Motor neuron (in vitro differentiated cells): ENCODE measurements at regions of chr18 and their contacts with region 1.

Region 1: GRCh38 chr18:10304853-10305252 is 149.6 kb upstream of the APCDD1 start:
- ATAC-seq: peak in 7 of 8 experiments; percentile 52 to 93 (median 77)
- H3K4me3 ChIP-seq: no peak overlapping the region
- H3K27ac ChIP-seq: peak overlapping the region in 1 of 2 donors; percentile 52
- H3K4me1 ChIP-seq: peaks cover 6 to 12% of the 10 kb centered on the region in 2 donors

Region 2: DNA sequence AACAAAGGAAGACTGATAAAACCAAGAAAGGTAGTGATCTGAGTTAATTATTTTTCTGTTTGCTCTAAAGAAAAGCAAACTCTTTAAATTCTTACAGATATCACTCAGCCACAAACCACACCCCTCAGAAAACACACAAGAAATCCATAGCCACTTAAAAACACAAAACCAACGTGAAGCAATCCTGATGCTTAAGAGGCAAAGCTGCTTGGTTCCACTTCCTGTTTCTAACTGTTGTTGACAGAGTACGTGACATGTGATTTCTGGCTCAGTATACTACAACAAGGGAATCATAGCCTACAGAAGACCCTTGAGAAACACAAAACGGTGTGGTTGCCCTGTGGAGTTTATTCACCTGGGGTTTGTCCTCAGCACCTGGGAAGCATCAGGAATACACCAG is 91.3 kb before region 1 on chr18:
- in situ Hi-C with region 1: loop called in 1 of 9 experiments (anchors 25 kb)
- ATAC-seq: peak in 3 of 8 experiments; percentile 12 to 74 (median 42)
- H3K4me3 ChIP-seq: no peak overlapping the region
- H3K27ac ChIP-seq: no peak overlapping the region
- H3K4me1 ChIP-seq: peaks cover 13 to 16% of the 10 kb centered on the region in 2 donors

Region 3: DNA sequence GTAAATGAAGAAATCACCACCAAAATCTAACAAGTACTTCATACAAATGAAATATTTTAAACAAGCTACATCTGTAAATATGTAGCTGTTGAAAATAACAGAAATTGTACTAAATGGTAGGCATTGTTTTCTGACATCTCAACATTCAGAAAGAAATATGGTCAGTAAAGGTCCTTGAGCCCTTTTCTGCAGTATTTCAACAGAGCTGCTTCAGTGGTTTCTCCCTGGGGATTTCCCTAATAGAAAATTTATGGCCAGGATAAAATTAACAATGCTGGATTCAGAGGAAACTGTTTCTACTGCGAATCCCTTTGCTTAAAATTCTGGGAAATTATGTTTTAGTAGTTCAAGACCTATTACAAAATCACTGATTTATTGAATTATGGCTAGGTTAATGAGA is 587.9 kb after region 1 on chr18:
- in situ Hi-C with region 1: no loop called
- ATAC-seq: peak; percentile 25 to 70 (median 53)
- H3K4me3 ChIP-seq: no peak overlapping the region
- H3K27ac ChIP-seq: peak overlapping the region; percentile 1 to 38
- H3K4me1 ChIP-seq: peaks cover 34 to 50% of the 10 kb centered on the region in 2 donors